ENCODE measurements at regions of chr3 and their contacts with region 1.

Region 1: GRCh38 chr3:182837855-182838454 is 44.7 kb downstream of the ATP11B start:
- DNase-seq: peak in 1 of 5 donors; percentile 34
- H3K4me3 ChIP-seq: no peak overlapping the region
- H3K27ac ChIP-seq: no peak overlapping the region
- H3K4me1 ChIP-seq: no peaks in the 10 kb centered on the region
- H3K27me3 ChIP-seq: no peaks in the 10 kb centered on the region
- CTCF ChIP-seq: peak; percentile 29

Region 2: DNA sequence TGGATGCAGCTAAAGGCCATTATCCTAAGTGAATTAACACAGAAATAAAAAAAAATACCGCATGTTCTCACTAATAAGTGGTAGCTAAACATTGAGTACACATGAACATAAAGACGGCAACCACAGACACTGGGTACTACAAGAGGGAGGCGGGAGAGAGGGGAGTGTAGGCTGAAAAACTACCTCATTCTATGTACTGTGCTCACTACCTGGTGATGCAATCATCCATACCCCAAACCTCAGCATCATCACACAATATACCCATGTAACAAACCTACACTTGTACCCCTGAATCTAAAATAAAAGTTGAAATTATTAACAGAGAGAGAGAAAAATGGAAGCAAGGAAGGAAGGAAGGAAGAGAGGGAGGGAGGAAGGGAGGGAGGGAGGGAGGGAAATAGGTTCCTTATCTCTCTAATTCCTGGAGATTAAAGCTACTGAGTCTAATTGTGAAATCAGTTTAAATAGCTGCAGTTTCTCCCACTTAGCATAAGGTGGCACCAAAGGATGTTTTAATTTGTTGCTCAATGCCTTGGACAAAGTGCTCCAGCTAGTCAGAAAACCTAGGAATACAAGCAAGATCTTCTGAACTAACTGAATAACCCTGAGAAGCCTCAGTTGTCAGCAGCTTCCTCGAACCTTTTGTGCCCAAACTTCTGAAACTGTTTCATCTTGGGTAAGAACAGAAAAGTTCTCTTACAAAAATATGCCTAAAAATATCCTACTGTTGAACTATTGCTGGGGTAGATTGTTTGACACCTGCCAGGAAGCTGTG is 124.0 kb before region 1 on chr3:
- intact Hi-C with region 1: loop called (anchors 5 kb)
- DNase-seq: peak in 2 of 5 donors; percentile 70 to 85
- H3K4me3 ChIP-seq: no peak overlapping the region
- H3K27ac ChIP-seq: no peak overlapping the region
- H3K4me1 ChIP-seq: peaks cover 0 to 7% (median 3%) of the 10 kb centered on the region in 3 donors
- H3K27me3 ChIP-seq: no peaks in the 10 kb centered on the region
- CTCF ChIP-seq: peak; percentile 74

Region 3: DNA sequence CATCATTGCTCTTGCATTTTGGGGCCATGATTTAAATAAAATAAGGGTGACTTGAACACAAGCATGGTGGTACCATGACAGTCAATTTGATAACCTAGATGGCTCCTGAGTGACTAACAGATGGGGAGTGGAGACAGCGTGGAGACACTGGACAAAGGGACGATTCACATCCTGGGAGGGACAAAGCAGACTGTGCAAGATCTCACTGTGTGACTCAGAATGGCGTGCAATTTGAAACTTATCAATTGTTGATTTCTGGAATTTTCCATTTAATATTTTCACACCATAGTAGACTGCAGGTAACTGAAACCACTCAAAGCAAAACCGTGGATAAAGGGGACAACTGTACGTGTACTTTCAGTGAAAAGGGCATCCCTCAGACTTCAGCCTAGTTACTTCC is 235.9 kb after region 1 on chr3:
- intact Hi-C with region 1: no loop called
- DNase-seq: no peak
- H3K4me3 ChIP-seq: no peak overlapping the region
- H3K27ac ChIP-seq: no peak overlapping the region
- H3K4me1 ChIP-seq: no peaks in the 10 kb centered on the region
- H3K27me3 ChIP-seq: no peaks in the 10 kb centered on the region
- CTCF ChIP-seq: no peak